ENCODE measurements at regions of chr21 and their contacts with region 1.

Region 1: GRCh38 chr21:42309753-42310221 is 5.4 kb downstream of the TFF3 start:
- DNase-seq: peak; percentile 61
- H3K4me3 ChIP-seq: peak overlapping the region; percentile 22
- H3K27ac ChIP-seq: no peak overlapping the region
- H3K4me1 ChIP-seq: no peaks in the 10 kb centered on the region
- H3K27me3 ChIP-seq: no peaks in the 10 kb centered on the region
- CTCF ChIP-seq: peak; percentile 94

Region 2: DNA sequence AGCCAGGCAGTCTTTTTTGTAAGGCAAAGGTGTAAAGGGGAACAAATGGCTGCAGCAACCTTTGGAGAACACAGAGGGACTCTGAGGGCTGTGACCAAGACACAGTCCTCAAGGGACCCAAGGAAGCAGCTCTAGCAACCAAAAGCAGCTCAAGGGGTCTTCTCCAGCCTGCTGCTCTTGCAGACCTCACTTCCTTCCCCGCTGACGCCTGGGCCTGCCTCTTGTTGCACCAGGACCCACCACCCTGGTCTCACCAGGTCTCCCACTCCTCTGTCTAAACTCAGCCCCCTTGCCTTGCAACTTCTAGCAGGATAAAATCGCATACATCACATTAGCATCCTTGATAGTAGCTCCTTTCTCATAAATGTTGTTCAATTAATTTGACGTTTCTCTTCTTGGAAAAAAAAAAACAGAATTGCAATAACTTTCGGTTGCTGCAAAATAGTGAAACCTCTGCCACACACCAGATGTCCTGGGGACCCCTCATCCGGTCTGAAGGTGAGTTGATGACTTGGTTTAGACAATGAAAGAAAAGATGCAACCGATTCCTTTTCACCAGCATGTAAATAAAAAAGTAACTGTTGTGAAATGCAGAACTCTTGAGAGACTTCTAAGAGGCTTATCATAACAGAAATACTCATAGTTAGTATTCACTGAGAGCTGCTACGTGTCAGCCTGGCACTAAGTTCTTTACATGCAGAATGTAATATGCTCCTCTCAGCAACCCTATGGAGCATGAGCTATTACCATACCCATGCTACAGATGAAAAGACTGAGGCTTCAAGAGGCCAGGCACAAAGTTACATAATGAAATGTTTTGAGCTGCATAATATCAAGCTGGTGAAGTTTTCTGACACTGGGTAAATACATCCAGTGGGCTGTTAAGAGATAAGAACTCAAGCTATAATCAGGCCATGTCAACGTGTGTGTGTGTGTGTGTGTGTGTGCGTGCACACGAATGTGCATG is 180.2 kb before region 1 on chr21:
- CTCF ChIA-PET with region 1: interaction called, 11 read pairs
- POLR2A ChIA-PET with region 1: no interaction called
- intact Hi-C with region 1: no loop called
- DNase-seq: no peak
- H3K4me3 ChIP-seq: no peak overlapping the region
- H3K27ac ChIP-seq: no peak overlapping the region
- H3K4me1 ChIP-seq: no peaks in the 10 kb centered on the region
- H3K27me3 ChIP-seq: no peaks in the 10 kb centered on the region
- CTCF ChIP-seq: no peak

Region 3: DNA sequence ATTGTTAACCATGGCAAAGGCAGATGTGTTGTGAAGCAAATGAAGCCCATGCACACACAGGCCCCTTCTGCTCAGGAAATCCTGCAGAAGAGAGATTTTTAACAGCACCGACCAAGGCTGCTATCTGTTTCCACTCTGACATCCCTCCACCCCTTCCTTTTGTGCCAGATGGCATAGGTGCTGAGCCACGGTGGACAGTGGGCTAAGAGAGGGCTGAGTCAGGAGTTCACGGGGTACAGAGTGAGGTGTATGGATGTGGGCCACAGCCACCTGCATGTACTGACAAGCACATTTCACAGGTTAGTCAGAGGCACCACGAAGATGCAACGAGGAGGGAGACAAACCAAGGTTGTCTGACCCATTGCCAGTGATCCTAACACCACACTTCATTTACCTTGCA is 176.7 kb after region 1 on chr21:
- CTCF ChIA-PET with region 1: no interaction called
- POLR2A ChIA-PET with region 1: no interaction called
- intact Hi-C with region 1: no loop called
- DNase-seq: no peak
- H3K4me3 ChIP-seq: no peak overlapping the region
- H3K27ac ChIP-seq: no peak overlapping the region
- H3K4me1 ChIP-seq: no peaks in the 10 kb centered on the region
- H3K27me3 ChIP-seq: no peaks in the 10 kb centered on the region
- CTCF ChIP-seq: no peak

Region 4: GRCh38 chr21:42531771-42532170 is 222.0 kb after region 1 on chr21:
- CTCF ChIA-PET with region 1: interaction called, 12 read pairs
- POLR2A ChIA-PET with region 1: no interaction called
- intact Hi-C with region 1: loop called (anchors 5 kb)
- DNase-seq: no peak
- H3K4me3 ChIP-seq: no peak overlapping the region
- H3K27ac ChIP-seq: no peak overlapping the region
- H3K4me1 ChIP-seq: peaks cover 25% of the 10 kb centered on the region
- H3K27me3 ChIP-seq: no peaks in the 10 kb centered on the region
- CTCF ChIP-seq: no peak